Naive thymus-derived CD4-positive, alpha-beta T cell (primary cell): ENCODE measurements at regions of chr7 and their contacts with region 1.

Region 1: GRCh38 chr7:150502519-150502918 is 12.2 kb upstream of the GIMAP7 start:
- DNase-seq: peak in 7 of 9 donors; percentile 54 to 80 (median 71)
- ATAC-seq: peak; percentile 95
- H3K4me3 ChIP-seq: peak overlapping the region; percentile 15
- H3K4me3 Mint-ChIP-seq: peak overlapping the region; percentile 55 to 93 (median 70)
- H3K27ac ChIP-seq: peak overlapping the region; percentile 71
- H3K27ac Mint-ChIP-seq: peak overlapping the region; percentile 90 to 98 (median 94)
- H3K4me1 ChIP-seq: peaks cover 34 to 46% of the 10 kb centered on the region in 2 donors
- H3K4me1 Mint-ChIP-seq: peaks cover 38 to 98% (median 93%) of the 10 kb centered on the region in 7 donors
- H3K27me3 ChIP-seq: no peaks in the 10 kb centered on the region
- H3K27me3 Mint-ChIP-seq: no peaks in the 10 kb centered on the region

Region 2: GRCh38 chr7:149586646-149587332 is 915.7 kb before region 1 on chr7:
- CTCF ChIA-PET with region 1: no interaction called
- POLR2A ChIA-PET with region 1: no interaction called
- intact Hi-C with region 1: no loop called
- DNase-seq: no peak
- ATAC-seq: no peak
- H3K4me3 ChIP-seq: no peak overlapping the region
- H3K4me3 Mint-ChIP-seq: no peak overlapping the region
- H3K27ac ChIP-seq: no peak overlapping the region
- H3K27ac Mint-ChIP-seq: no peak overlapping the region
- H3K4me1 ChIP-seq: no peaks in the 10 kb centered on the region
- H3K4me1 Mint-ChIP-seq: peaks cover 10 to 27% (median 17%) of the 10 kb centered on the region in 7 donors
- H3K27me3 ChIP-seq: no peaks in the 10 kb centered on the region
- H3K27me3 Mint-ChIP-seq: no peaks in the 10 kb centered on the region

Region 3: DNA sequence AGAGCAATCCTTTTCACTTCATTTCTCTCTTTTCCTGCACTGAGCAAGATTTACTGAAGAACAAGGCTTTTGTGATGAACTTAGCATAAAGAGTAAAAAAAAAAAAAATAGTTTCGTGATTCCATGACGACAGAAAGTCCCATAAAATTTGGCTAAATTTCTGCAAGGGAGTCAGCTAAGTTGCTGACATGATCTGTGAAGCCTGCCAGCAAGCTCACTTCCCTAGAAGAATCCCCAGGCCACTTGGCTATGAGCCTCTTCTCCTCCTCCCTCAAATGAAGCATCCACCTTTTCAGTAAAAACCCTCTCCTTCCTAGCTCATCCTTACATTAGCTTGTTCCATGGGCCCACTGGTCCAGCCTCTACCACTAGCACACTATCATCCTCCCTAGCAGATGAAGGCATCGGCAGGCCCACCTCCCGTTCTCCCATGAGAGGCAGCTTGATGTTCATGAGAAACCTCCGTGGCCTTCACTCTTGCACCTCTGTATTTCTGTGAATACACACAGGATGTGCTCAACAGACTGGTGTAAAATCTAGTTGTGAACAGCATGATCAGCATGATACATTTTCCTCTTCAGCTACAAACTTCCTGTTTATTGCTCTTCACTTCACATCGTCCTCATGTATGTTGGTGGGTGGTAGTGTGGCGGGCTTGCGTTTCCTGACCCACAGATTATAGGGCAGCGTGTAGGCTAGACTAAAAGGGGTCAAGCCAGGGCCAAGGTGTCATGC is 21.2 kb before region 1 on chr7:
- CTCF ChIA-PET with region 1: interaction called, 11 read pairs
- POLR2A ChIA-PET with region 1: interaction called, 320 read pairs
- intact Hi-C with region 1: loop called (anchors 1 kb)
- DNase-seq: peak in 8 of 9 donors; percentile 46 to 81 (median 71)
- ATAC-seq: peak; percentile 68
- H3K4me3 ChIP-seq: peak overlapping the region; percentile 12
- H3K4me3 Mint-ChIP-seq: peak overlapping the region; percentile 79 to 97 (median 90)
- H3K27ac ChIP-seq: peak overlapping the region; percentile 95
- H3K27ac Mint-ChIP-seq: peak overlapping the region; percentile 97 to 100 (median 100)
- H3K4me1 ChIP-seq: peaks cover 84 to 89% of the 10 kb centered on the region in 2 donors
- H3K4me1 Mint-ChIP-seq: peaks cover 58 to 99% (median 92%) of the 10 kb centered on the region in 7 donors
- H3K27me3 ChIP-seq: no peaks in the 10 kb centered on the region
- H3K27me3 Mint-ChIP-seq: no peaks in the 10 kb centered on the region

Region 4: DNA sequence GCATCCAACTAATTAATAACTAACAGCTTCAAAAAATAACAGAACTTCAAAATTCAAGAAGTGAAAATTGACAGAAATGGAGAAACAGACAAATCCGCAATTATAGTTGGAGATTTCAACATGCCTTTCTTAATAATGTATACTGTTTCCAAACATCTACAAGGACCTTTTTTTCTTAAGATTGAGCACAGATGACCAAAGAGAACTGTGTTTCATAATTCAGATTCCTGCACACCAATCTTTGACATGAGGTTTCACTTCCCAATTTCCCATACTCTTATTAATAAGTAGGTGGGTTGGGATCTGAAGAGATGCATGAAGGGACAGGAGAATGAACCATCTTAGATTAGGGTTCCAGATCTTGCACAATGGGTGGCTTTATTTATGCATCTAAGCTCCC is 12.7 kb before region 1 on chr7:
- CTCF ChIA-PET with region 1: interaction called, 4 read pairs
- POLR2A ChIA-PET with region 1: interaction called, 320 read pairs
- intact Hi-C with region 1: loop called in 1 of 2 experiments (anchors 1 kb)
- DNase-seq: no peak
- ATAC-seq: peak; percentile 60
- H3K4me3 ChIP-seq: no peak overlapping the region
- H3K4me3 Mint-ChIP-seq: peak overlapping the region in 1 of 10 donors; percentile 43
- H3K27ac ChIP-seq: no peak overlapping the region
- H3K27ac Mint-ChIP-seq: peak overlapping the region in 4 of 9 donors; percentile 5 to 99 (median 70)
- H3K4me1 ChIP-seq: peaks cover 12 to 28% of the 10 kb centered on the region in 2 donors
- H3K4me1 Mint-ChIP-seq: peaks cover 22 to 84% (median 76%) of the 10 kb centered on the region in 7 donors
- H3K27me3 ChIP-seq: no peaks in the 10 kb centered on the region
- H3K27me3 Mint-ChIP-seq: no peaks in the 10 kb centered on the region